AG04449 (cell line): ENCODE measurements at regions of chr1 and their contacts with region 1.

Region 1: DNA sequence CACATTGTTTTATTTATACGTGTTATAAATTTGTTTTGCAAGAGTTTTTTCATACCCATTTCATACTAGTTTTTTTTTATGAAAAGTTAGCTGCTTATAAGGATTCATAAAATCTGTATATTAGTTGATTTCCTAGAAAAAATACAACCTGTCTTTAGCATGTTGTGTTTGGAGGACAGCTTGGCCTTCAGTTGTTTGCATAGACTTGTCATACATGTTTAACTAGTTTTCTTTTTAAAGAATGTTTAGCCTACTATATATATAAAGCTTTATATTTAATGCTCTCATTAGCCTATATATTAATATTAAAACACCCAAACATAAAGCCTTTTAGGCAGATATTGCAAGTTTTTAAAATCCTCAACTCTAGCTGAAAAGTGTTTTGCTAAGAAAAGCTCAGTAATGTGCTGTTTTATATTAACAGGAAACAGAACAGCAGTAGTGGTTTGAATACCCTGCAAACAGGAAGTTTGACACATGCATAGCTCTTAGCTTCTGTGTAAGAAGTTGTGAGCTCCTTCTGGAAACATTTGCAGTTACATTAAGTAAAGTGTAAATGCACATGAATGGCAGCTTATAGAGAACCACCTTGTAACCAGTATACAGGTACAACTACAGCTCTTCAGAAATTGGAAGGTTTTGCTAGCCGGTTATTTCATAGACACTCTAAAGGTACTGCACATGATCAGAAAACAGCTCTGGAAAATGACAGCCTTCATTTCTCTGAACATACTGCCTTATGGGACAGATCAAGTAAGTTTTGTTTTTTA is at the start of gene PRKACB:
- DNase-seq: no peak
- H3K4me3 ChIP-seq: no peak within 1 kb of the TSS
- CTCF ChIP-seq: no peak

Region 2: DNA sequence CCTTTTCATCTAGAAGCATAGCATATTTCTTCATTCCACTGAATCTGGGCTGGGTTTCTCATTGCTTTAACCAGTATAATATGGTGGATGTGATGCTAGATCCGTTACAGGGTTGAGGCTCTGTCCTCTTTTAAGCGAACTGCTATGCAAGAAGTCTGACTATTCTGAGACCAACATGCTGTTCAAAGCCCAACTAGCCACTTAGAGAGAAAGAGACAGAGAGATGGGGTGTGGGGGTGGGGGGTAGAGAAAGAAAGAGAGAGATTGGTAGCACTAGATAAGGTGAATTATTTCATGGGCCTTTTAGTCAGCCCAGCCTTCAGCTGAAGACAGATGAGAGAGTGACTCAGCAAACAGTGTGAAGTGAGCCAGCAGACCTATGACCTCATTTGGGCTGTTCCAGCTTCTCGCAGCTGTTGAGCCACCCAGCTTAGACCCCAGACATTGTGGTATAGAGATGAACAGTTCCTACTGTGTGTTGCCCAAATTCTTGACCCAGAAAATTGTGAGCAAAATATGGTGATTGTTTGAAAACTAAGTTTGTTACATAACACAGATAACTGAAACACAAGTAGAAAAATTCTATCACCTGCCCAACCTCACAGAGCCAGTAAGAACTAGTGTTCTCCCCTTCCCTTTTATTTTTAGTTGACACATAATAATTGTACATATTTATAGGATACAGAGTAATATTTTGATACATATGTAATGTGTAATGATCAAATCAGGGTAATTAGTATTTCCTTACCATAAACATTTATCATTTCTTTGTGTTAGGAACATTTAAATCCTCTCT is 40.6 kb before region 1 on chr1:
- CTCF ChIA-PET with region 1: no interaction called
- POLR2A ChIA-PET with region 1: no interaction called
- DNase-seq: peak; percentile 49
- H3K4me3 ChIP-seq: no peak overlapping the region
- CTCF ChIP-seq: no peak

Region 3: DNA sequence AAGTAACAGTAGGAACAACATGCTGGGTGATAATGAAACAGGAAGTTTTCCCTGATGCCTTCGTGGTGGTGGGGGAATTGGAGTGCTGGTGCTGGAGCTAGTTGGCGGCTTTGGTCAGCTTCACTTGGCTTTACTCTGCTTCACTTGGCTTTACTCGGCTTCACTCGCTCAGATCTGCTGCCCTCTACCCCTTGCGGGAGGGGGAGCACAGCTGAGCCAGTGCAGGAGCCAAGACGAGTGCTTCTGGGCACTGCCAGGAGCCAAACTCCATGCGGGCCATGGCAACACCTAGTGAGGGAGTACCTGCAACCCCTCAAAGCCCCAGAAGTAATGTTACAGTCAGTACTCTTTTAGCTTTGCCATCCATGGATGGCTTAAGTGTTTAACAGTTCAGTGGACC is 10.5 kb before region 1 on chr1:
- CTCF ChIA-PET with region 1: interaction called, 11 read pairs
- POLR2A ChIA-PET with region 1: no interaction called
- DNase-seq: no peak
- H3K4me3 ChIP-seq: no peak overlapping the region
- CTCF ChIP-seq: no peak